ENCODE measurements at regions of chr7 and their contacts with region 1.

Region 1: GRCh38 chr7:2403014-2403717 is at the start of gene CHST12:
- DNase-seq: peak; percentile 73 to 96
- H3K4me3 ChIP-seq: peak within 1 kb of the TSS; percentile 99
- H3K27ac ChIP-seq: peak within 1 kb of the TSS; percentile 66 to 78
- H3K4me1 ChIP-seq: peaks cover 14 to 29% of the 10 kb centered on the region in 2 donors
- H3K27me3 ChIP-seq: no peaks in the 10 kb centered on the region
- CTCF ChIP-seq: no peak
- total RNA-seq, gene CHST12: 79.4 TPM

Region 2: DNA sequence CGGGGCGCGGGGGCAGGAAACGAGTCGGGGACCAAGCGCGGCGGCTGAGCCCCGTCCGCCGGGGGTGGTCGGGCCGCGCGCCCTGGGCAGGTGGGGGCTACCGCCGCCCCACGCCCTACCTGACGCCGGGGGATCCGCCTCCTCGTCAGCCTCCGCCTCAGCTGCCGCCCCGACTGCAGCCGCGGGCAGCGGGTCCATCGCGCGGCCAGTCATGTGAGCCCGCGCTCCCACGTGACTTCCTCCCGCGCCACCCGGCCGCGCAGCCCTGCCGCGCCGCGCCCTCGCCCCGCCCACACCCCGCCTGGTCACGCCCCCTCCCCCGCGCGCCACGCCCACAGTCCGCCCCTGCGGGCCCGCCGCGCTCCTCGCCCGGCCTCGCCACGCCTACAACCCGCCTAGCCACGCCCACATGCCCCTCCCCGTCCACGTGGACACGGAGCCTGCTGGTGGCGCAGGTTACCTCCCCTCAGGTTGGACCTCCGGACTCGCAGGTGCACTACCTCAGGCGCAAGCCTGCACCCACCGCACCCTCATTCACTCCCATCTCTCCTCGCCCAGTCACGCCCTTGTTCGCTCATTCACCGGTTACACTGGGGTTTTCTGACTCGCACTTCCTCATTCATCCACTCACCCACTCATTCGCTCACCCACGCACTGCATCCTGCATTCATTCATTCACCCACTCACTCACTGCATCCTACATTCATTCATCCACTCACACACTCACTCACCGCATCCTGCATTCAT is 88.8 kb before region 1 on chr7 and contains the start of gene SNX8:
- intact Hi-C with region 1: loop called (anchors 2 kb)
- DNase-seq: peak; percentile 51 to 88
- H3K4me3 ChIP-seq: peak within 1 kb of the TSS; percentile 77 to 93
- H3K27ac ChIP-seq: peak within 1 kb of the TSS; percentile 65 to 69
- H3K4me1 ChIP-seq: peaks cover 0 to 7% of the 10 kb centered on the region in 2 donors
- H3K27me3 ChIP-seq: no peaks in the 10 kb centered on the region
- CTCF ChIP-seq: no peak
- total RNA-seq, gene SNX8: 12.2 TPM